ENCODE measurements at regions of chr3 and their contacts with region 1.

Region 1: DNA sequence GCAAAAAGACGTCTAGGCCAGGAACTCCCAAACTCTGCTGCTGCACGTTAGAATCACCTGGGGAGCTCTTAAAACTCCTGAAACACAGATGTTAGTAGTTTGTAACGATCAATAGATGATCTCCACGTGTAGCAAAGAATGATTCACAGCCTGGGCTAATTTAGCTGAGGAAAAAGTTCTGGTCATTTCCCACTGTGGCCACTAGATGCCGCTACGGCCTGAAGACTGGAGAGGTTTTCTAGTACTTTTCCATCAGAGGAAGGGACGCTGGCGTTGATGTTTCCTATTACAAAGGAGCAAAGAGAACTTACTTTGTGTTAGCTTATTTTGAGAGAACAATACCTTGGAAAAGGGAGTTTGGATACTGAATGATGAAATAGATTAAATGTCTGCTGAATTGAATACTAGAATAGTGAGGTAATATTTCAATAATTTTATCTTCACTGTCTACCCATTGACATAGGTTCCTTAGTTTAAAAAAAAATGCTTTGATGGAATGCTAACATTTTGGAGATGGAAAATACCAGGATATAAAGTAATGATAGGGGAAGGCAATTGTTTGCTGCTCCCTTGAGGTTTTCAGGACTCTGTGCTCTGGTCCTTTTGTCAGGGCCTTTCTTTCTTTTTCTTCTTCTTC is 159.1 kb downstream of the P3H2 start:
- DNase-seq: peak; percentile 68
- CTCF ChIP-seq: peak; percentile 92

Region 2: DNA sequence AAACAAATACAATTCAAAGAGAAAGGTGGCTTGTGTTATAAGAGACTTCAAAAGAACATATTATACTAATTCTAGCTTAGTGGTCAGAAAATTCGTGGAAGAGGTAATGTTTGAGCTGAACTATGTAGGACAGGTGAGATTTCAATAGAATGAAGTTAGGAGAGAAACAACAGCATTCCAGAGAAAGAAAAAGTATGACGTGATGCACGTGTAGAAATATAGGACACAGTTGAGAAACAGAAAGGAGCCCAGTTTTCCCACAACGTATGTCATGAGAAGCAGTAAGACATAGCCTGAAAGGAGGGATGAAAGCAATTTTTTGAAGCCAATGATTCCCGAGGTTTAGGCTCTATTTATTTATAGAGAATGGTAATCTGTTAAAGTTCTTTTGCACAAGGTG is 177.7 kb after region 1 on chr3:
- in situ Hi-C with region 1: no loop called
- DNase-seq: no peak
- CTCF ChIP-seq: no peak

Region 3: DNA sequence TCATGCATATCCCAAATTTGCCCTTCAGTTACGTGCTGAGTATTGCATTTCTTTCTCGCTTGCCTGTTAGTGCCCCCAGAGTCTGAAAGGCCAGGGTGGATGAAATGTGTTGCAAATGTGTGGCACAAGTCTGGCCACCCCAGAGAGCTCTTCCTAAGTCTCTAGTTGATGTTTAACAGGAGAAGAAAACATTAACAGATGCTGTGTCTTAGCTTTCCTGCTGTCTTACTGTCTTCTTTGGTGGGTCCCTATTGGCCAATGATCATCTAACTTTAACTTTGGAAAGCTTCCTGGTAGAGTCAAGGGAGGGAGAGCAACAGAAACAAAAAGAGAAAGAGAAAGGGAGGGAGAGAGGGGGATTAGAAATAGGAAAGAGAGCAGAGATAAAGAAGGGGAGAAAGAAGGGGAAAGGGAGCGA is 235.7 kb after region 1 on chr3:
- in situ Hi-C with region 1: loop called (anchors 10 kb)
- DNase-seq: no peak
- CTCF ChIP-seq: no peak

Region 4: GRCh38 chr3:190696777-190697501 is 735.3 kb after region 1 on chr3:
- in situ Hi-C with region 1: loop called (anchors 25 kb)
- DNase-seq: peak; percentile 8
- CTCF ChIP-seq: peak; percentile 46